Activated CD8-positive, alpha-beta memory T cell treated with anti-CD3 and anti-CD28 coated beads, Interleukin-2, amount 10 ng/mL, durations not matched to agents 7 days and 5 days (primary cell): ENCODE measurements at regions of chr9 and their contacts with region 1.

Region 1: DNA sequence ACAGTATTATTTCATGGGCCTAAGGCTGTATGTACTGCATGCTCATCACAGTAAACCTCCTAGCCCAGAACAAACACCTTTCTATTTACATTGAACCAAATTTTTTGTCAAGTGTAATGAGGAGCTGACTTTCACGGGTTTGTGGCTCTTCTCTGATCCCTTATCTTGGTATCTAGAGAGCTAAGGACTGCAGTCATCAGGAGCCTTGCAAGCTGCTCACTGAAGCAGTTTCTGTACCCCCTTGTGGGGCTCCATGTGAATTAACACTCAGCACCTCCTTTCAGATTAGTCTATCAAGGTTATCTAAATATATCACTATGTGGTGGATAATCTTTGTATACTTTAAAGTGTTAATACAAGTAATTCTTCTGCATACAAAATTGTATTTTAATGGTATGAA is 108.2 kb downstream of the AUH start:
- DNase-seq: peak; percentile 77
- ATAC-seq: peak; percentile 96
- H3K4me3 Mint-ChIP-seq: no peak overlapping the region
- H3K27ac Mint-ChIP-seq: no peak overlapping the region
- H3K4me1 Mint-ChIP-seq: peaks cover 47% of the 10 kb centered on the region
- H3K27me3 Mint-ChIP-seq: no peaks in the 10 kb centered on the region

Region 2: DNA sequence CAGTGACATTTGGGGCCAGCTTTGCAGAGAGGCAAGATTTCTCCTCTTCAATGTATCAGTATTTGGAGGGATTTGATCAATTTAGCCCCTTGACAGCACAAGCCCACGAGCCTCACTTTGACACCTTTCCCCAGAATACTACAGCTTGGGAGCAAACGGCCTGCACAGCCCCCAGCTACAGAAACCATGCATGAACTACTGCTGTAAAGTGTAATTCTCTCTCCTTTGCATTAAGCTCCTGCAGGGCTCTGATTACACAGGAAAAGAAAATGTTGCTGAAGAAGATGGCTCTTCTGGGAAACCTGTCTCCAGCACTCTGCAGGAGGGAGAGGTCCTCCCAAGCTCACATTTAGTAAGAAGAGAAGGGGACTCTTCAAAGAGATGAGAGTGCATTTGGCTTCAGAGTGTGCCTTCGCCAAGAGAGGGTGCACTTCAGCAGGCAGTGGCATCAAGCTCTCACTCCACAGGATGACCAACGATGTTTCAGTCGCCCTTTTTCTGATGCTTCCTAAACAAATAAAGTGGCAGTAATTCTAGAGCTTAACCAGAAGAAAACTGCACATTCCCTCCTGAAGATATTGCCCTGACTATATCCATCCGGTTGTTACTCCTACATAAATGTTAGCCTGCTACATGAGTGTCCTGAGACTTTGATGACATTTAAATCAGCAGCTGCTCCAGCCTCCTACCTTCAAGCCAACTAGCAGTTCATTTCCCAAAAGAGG is 163.9 kb before region 1 on chr9:
- CTCF ChIA-PET with region 1: interaction called, 17 read pairs
- DNase-seq: peak; percentile 56
- ATAC-seq: peak; percentile 76
- H3K4me3 Mint-ChIP-seq: no peak overlapping the region
- H3K27ac Mint-ChIP-seq: peak overlapping the region; percentile 70
- H3K4me1 Mint-ChIP-seq: peaks cover 64% of the 10 kb centered on the region
- H3K27me3 Mint-ChIP-seq: no peaks in the 10 kb centered on the region